Psoas muscle (tissue), 8 donors: ENCODE measurements at regions of chr2 and their contacts with region 1.

Region 1: DNA sequence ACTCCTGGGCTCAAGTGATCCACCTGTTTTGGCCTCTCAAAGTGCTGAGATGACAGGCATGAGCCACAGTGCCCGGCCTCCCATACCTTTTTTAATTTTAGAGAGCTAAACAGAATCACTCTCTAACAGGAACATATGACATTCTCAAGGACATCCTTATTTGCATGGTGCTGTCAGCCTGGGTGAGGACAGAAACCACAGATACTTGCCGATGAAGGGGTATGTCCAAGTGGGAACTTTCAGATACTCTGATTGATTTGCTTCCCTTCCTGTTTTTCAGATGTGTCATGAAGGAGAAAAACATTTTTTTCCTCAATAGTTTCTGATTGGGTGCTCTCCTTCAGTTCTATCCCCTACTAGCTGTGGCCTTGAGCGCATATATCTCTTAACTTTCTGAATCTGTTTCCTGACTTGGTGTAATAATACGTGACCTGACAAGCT is 49.6 kb downstream of the MYO3B start:
- DNase-seq: no peak
- ATAC-seq: no peak
- H3K4me3 ChIP-seq: no peak overlapping the region
- H3K27ac ChIP-seq: no peak overlapping the region
- H3K4me1 ChIP-seq: no peaks in the 10 kb centered on the region
- H3K27me3 ChIP-seq: no peaks in the 10 kb centered on the region
- CTCF ChIP-seq: no peak

Region 2: GRCh38 chr2:168858146-168858545 is 1369.4 kb before region 1 on chr2:
- intact Hi-C with region 1: no loop called
- DNase-seq: no peak
- ATAC-seq: no peak
- H3K4me3 ChIP-seq: no peak overlapping the region
- H3K27ac ChIP-seq: no peak overlapping the region
- H3K4me1 ChIP-seq: no peaks in the 10 kb centered on the region
- H3K27me3 ChIP-seq: no peaks in the 10 kb centered on the region
- CTCF ChIP-seq: no peak

Region 3: DNA sequence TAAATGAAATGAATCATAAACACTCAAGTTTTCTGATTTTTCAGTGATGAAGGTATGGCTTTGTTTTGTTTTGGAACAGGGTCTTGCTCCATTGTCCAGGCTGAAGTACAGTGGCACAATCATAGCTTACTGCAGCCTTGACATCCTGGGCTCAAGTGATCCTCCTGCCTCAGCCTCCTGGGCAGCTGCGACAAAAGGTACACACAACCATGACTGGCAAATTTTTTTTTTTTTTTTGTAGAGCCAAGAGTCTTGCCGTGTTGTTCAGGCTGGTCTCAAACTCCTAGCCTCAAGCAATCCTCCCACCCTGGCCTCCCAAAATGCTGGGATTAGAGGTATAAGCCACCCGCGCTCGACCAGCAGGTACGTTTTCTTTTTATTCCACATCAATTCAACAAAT is 842.7 kb before region 1 on chr2:
- intact Hi-C with region 1: loop called in 1 of 2 experiments (anchors 5 kb)
- DNase-seq: no peak
- ATAC-seq: no peak
- H3K4me3 ChIP-seq: no peak overlapping the region
- H3K27ac ChIP-seq: no peak overlapping the region
- H3K4me1 ChIP-seq: no peaks in the 10 kb centered on the region
- H3K27me3 ChIP-seq: peaks cover 0 to 2% (median 0%) of the 10 kb centered on the region in 3 donors
- CTCF ChIP-seq: no peak

Region 4: DNA sequence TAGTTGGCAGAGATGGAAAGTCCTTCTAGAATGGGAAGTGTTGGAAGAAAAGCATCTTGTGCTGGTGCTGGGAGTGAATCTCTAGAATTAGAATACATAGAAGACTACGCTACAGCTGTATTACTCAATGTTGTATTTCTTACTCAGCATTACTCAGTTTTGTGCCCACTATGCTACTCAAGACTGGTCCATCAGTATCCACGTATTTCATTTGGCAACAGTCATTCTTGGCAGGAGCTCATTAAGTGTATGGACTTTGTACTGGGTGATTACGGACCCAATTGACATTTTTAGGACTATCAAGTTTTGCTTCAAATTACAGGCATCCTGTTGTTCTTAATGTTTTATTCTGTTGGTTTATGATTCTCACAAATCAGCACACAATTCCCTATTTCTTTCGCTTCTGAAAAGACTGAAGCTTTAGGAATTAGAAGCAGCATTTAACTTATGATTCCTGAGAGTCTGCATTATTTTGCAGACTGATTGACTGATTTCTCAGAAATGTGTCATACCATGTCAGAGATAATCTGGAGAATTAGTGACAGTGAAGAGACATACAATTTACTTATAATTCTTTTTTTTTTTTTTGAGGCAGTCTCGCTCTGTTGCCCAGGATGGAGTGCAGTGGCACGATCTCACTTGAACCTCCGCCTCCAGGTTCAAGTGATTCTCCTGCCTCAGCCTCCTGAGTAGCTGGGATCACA is 87.4 kb after region 1 on chr2:
- intact Hi-C with region 1: no loop called
- DNase-seq: no peak
- ATAC-seq: no peak
- H3K4me3 ChIP-seq: no peak overlapping the region
- H3K27ac ChIP-seq: no peak overlapping the region
- H3K4me1 ChIP-seq: no peaks in the 10 kb centered on the region
- H3K27me3 ChIP-seq: peaks cover 0 to 5% (median 0%) of the 10 kb centered on the region in 3 donors
- CTCF ChIP-seq: no peak

Region 5: DNA sequence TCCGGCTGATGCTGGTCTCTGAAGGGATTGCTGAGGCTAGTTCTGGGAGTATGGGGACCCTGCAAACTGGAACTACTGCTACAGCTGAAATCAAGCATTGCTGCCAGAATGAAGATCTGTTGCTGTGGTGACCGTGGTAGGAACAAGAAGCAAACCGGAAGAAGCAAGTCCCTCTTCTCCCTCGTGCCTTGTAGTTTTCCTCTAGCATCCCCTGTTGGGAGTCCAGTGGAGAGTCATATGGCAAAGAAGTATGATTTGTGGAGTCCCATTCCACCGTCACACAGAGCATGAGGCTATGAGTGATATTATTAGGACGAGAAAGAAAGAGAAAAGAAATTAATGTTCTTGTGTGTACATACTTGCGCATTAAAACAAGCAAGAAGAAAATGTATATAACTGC is 348.8 kb after region 1 on chr2:
- intact Hi-C with region 1: no loop called
- DNase-seq: no peak
- ATAC-seq: no peak
- H3K4me3 ChIP-seq: no peak overlapping the region
- H3K27ac ChIP-seq: no peak overlapping the region
- H3K4me1 ChIP-seq: no peaks in the 10 kb centered on the region
- H3K27me3 ChIP-seq: no peaks in the 10 kb centered on the region
- CTCF ChIP-seq: no peak